Right ventricle myocardium inferior (tissue), 1 donor: ENCODE measurements at regions of chr1 and their contacts with region 1.

Region 1: DNA sequence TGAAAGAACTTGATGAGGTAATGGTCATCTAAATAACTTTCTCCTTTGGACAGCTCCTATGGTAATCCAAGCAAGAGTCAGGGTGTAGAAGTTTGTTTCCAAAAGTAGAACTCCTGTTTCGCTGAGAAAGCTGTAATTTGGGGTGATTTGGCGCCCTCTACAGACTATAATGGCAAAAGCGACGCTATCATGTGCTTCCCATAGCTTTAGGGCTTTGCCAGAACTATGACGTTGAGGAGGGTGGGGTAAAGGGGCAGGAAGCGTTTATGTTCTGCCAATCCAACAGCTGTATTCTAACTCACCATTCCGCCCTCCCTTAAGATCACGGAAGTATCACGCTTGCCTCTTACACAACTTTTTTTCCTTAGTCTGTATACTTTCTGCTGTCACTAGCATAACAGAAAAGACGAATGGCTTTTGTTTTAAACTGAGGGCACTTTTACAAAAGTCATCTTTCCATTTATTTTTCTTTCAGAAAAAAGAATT is at the start of gene FMO4:
- DNase-seq: peak; percentile 68
- ATAC-seq: peak; percentile 100
- total RNA-seq, gene FMO4: 2.7 TPM

Region 2: GRCh38 chr1:170967042-170967910 is 346.6 kb before region 1 on chr1:
- intact Hi-C with region 1: loop called (anchors 5 kb)
- DNase-seq: no peak
- ATAC-seq: peak; percentile 54

Region 3: GRCh38 chr1:171081314-171081753 is 232.5 kb before region 1 on chr1:
- intact Hi-C with region 1: loop called (anchors 5 kb)
- DNase-seq: no peak
- ATAC-seq: peak; percentile 55

Region 4: GRCh38 chr1:171245458-171246064 is 68.3 kb before region 1 on chr1:
- intact Hi-C with region 1: loop called (anchors 1 kb)
- DNase-seq: no peak
- ATAC-seq: peak; percentile 60